Activated T-helper 1 cell treated with anti-CD3 and anti-CD28 coated beads, Interleukin-12 subunit alpha, Interleukin-12 subunit beta, Interleukin-2, Interleukin-4 antibody, amounts not matched to agents 30 ng/mL and 10 ng/mL and 1 ng/mL, durations not matched to agents 14 hours and 24 hours and 36 hours (primary cell): ENCODE measurements at regions of chr12 and their contacts with region 1.

Region 1: DNA sequence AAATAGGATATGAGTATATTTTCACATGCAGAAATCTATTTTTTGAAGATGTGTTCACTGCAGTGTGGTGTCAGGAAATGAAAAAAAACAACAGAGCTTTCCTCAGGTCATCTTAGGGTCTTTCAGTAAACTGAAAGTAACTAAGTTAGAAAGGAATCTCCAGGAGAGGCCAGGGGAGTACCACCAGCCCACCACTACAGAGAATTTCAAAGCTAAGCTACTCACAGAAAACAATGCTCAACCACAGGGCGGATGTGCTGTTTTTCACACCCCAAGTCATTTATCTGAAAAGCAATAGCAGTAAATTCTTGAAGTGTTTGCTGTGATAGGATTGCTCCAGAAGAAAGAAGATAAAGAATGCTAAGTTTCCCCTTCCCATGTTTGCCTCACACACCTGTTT is 79.0 kb downstream of the IFNG start:
- DNase-seq: peak; percentile 57
- H3K4me3 Mint-ChIP-seq: peak overlapping the region; percentile 2
- H3K27ac Mint-ChIP-seq: peak overlapping the region; percentile 80
- H3K4me1 Mint-ChIP-seq: peaks cover 57% of the 10 kb centered on the region
- H3K27me3 Mint-ChIP-seq: no peaks in the 10 kb centered on the region

Region 2: DNA sequence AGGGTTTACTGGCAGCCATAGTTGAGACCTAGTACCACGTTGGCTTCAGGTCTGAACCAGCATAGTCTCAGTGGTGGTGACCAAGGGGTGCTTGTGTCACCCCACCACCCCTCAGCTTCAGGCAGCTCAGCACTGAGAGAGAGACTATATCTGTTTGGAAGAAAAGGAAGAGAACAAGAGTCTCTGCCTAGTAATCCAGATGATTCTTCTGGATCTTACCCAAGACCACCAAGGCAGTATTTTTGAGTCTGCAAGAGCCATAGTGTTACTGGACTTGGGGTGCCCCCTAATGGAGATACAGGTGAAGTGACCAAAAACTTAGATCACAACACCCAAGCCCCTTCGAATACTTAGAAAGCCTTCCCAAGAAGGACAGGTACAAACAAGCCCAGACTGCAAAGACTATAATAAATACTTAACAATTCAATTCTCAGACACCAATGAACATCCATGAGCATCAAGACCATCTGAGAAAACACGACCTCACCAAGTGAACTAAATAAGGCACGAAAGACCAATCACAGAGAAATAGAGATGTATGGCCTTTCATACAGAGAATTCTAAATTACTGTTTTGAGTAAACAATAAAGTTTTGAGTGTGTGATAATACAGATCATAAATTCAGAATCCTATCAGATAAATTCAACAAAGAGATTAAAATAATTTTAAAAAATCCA is 1671.2 kb before region 1 on chr12:
- intact Hi-C with region 1: no loop called
- DNase-seq: peak; percentile 20
- H3K4me3 Mint-ChIP-seq: no peak overlapping the region
- H3K27ac Mint-ChIP-seq: no peak overlapping the region
- H3K4me1 Mint-ChIP-seq: no peaks in the 10 kb centered on the region
- H3K27me3 Mint-ChIP-seq: peaks cover 21% of the 10 kb centered on the region

Region 3: GRCh38 chr12:67772276-67773169 is 308.1 kb before region 1 on chr12:
- intact Hi-C with region 1: no loop called
- DNase-seq: no peak
- H3K4me3 Mint-ChIP-seq: no peak overlapping the region
- H3K27ac Mint-ChIP-seq: no peak overlapping the region
- H3K4me1 Mint-ChIP-seq: no peaks in the 10 kb centered on the region
- H3K27me3 Mint-ChIP-seq: no peaks in the 10 kb centered on the region

Region 4: GRCh38 chr12:68001486-68002466 is 78.8 kb before region 1 on chr12:
- intact Hi-C with region 1: loop called (anchors 2 kb)
- DNase-seq: no peak
- H3K4me3 Mint-ChIP-seq: no peak overlapping the region
- H3K27ac Mint-ChIP-seq: no peak overlapping the region
- H3K4me1 Mint-ChIP-seq: peaks cover 35% of the 10 kb centered on the region
- H3K27me3 Mint-ChIP-seq: no peaks in the 10 kb centered on the region

Region 5: DNA sequence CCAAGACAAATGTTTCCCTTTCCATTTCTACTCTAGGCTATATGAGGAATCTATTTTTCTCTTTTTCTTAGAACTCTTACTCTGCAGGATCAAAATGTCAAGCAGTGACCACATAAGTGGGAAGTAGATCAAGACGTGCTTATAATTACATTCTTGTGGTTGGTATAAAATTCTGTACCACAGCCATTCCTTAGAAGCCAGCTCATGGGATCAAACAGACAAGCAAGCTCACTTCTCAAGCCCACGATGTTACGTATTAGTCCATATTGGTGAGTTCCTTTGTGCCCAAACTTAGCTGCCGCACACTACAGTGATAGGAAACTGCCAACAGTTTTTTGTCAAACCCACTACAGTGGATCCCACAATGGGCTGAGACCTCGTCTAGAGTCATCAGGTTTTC is 25.6 kb after region 1 on chr12:
- intact Hi-C with region 1: loop called (anchors 1 kb)
- DNase-seq: no peak
- H3K4me3 Mint-ChIP-seq: no peak overlapping the region
- H3K27ac Mint-ChIP-seq: no peak overlapping the region
- H3K4me1 Mint-ChIP-seq: peaks cover 16% of the 10 kb centered on the region
- H3K27me3 Mint-ChIP-seq: no peaks in the 10 kb centered on the region

Region 6: DNA sequence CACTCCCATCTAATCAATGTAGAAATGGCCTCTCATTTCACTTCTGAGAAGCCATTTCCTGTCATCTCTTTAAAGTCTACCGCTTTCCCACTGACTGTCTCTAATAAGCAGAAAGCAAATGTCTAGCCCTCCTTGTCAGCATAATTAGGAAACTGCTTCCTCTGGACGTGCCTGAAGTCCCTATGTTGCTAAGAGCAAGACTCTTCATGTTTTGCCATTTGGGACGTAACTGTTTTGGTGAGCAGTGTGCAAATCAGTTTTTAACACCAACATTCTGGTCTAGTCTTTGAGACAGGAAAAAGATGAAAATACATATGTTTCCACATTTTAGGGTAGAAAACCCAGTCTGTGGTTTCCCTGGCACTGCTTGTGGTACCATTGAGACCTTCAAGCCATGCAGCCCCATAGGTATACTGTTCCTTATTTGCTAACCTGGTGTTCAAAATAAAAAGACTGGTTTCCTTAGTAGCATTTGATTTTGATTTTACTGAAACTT is 56.8 kb after region 1 on chr12:
- intact Hi-C with region 1: loop called (anchors 1 kb)
- DNase-seq: no peak
- H3K4me3 Mint-ChIP-seq: peak overlapping the region; percentile 61
- H3K27ac Mint-ChIP-seq: peak overlapping the region; percentile 91
- H3K4me1 Mint-ChIP-seq: peaks cover 75% of the 10 kb centered on the region
- H3K27me3 Mint-ChIP-seq: no peaks in the 10 kb centered on the region

Region 7: GRCh38 chr12:68158432-68158831 is 77.9 kb after region 1 on chr12:
- intact Hi-C with region 1: loop called (anchors 1 kb)
- DNase-seq: no peak
- H3K4me3 Mint-ChIP-seq: peak overlapping the region; percentile 91
- H3K27ac Mint-ChIP-seq: peak overlapping the region; percentile 87
- H3K4me1 Mint-ChIP-seq: peaks cover 65% of the 10 kb centered on the region
- H3K27me3 Mint-ChIP-seq: no peaks in the 10 kb centered on the region

Region 8: DNA sequence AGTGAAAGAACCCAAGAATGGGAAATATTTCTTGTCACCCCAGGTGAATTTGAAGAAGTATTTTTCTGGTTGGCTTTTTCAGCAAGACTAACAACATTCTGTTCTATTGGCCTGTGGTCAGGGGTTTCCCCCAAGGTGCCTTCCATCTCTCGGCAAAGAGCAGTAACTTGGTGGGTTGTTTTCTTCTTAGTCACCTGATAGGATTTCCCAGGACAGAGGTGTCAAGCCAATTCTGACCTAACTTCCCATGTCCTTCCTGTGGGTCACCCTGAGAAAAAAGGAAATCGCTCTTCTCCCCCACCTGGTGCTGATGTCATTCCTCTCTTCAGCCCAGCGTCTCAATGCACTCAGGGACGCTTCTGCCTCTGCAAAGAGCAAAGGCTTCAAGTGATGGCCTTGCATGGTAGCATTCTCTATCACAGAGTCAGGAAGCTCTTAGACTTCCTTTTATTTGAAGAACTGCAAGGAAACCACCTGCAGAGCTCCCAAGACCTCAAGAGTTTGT is 95.0 kb after region 1 on chr12:
- intact Hi-C with region 1: loop called (anchors 1 kb)
- DNase-seq: peak; percentile 81
- H3K4me3 Mint-ChIP-seq: peak overlapping the region; percentile 32
- H3K27ac Mint-ChIP-seq: peak overlapping the region; percentile 85
- H3K4me1 Mint-ChIP-seq: peaks cover 81% of the 10 kb centered on the region
- H3K27me3 Mint-ChIP-seq: no peaks in the 10 kb centered on the region

Region 9: GRCh38 chr12:68189821-68190242 is 109.3 kb after region 1 on chr12:
- intact Hi-C with region 1: loop called (anchors 1 kb)
- DNase-seq: peak; percentile 41
- H3K4me3 Mint-ChIP-seq: peak overlapping the region; percentile 52
- H3K27ac Mint-ChIP-seq: peak overlapping the region; percentile 94
- H3K4me1 Mint-ChIP-seq: peaks cover 75% of the 10 kb centered on the region
- H3K27me3 Mint-ChIP-seq: no peaks in the 10 kb centered on the region